Activated T-helper 2 cell treated with anti-CD3 and anti-CD28 coated beads, Interferon-gamma antibody, Interleukin-2, Interleukin-4, amounts not matched to agents 10 μg/mL and 5 μg/mL and 100 μg/mL, durations not matched to agents 14 hours and 24 hours and 36 hours (primary cell): ENCODE measurements at regions of chr7 and their contacts with region 1.

Region 1: DNA sequence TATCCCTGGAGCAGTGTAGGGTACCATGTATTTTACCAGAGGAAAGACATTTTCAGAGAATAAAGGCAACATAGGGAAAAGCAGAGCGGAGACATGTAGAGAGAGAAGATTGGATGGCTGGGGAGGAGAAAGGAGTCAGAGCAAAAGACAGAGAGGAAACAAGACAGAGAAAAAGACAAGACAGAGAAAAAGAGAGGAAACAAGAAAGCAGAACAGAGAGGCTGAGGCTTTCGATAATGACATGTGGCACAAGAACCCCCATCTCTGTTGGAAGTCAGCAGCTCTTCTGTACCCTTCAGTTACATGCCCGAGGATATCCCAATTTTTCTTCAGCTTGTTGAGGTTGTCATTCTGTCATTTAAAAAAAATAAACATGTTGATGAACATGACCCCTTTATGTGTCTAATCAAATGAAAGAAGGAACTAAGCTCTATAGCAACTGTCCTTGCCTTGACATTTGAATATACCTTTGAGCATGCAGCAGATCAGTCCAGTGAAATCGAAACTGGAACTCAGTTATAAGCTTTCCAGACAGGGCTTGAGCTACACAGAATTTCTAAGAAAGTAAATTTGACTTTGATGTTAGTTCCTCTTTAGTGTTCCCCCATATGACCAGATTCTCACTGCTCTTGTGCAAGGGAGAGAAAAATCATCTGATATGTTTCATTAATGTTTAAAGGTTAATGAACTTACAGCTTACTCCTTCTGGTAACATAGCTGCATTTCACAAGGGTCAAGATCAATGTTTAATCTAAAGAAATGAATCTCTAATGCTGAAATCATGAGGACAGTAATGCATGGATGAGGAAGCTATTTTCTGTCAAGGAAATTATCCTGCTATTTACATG is 75.1 kb upstream of the SP4 start:
- DNase-seq: peak; percentile 31
- H3K4me3 Mint-ChIP-seq: peak overlapping the region; percentile 59
- H3K27ac Mint-ChIP-seq: peak overlapping the region; percentile 93
- H3K4me1 Mint-ChIP-seq: peaks cover 66% of the 10 kb centered on the region
- H3K27me3 Mint-ChIP-seq: no peaks in the 10 kb centered on the region

Region 2: GRCh38 chr7:19708397-19709248 is 1644.1 kb before region 1 on chr7 and contains the start of gene POLR1F:
- intact Hi-C with region 1: loop called (anchors 10 kb)
- DNase-seq: peak; percentile 93
- H3K4me3 Mint-ChIP-seq: peak within 1 kb of the TSS; percentile 93
- H3K27ac Mint-ChIP-seq: peak within 1 kb of the TSS; percentile 88
- H3K4me1 Mint-ChIP-seq: peaks cover 39% of the 10 kb centered on the region
- H3K27me3 Mint-ChIP-seq: peaks cover 8% of the 10 kb centered on the region
- total RNA-seq, gene POLR1F: 32.5 and 41.1 TPM in 2 replicates

Region 3: DNA sequence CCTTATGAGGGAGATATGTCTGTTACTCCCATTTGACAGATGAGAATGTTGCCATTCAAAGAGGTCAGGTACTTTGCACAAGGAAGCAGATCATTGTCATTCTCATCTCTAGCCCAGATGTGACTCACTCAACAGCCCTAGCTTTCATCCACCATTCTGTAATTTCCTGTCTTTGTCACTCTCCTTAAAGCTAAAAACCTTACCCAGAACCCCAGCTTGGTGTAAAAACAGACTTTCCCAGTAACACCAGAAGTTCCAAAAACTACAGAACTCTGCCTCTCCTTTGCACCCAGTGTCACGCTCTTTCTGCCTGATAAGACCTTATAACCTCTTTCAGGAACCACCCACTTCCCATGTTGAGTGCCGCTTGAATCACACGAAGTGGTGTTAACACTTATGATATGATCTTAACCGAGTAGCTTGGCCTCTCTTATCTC is 14.0 kb before region 1 on chr7:
- intact Hi-C with region 1: loop called (anchors 1 kb)
- DNase-seq: peak; percentile 73
- H3K4me3 Mint-ChIP-seq: peak overlapping the region; percentile 23
- H3K27ac Mint-ChIP-seq: peak overlapping the region; percentile 87
- H3K4me1 Mint-ChIP-seq: peaks cover 55% of the 10 kb centered on the region
- H3K27me3 Mint-ChIP-seq: no peaks in the 10 kb centered on the region

Region 4: GRCh38 chr7:21371360-21371759 is 18.6 kb after region 1 on chr7:
- intact Hi-C with region 1: loop called (anchors 2 kb)
- DNase-seq: no peak
- H3K4me3 Mint-ChIP-seq: no peak overlapping the region
- H3K27ac Mint-ChIP-seq: no peak overlapping the region
- H3K4me1 Mint-ChIP-seq: peaks cover 26% of the 10 kb centered on the region
- H3K27me3 Mint-ChIP-seq: no peaks in the 10 kb centered on the region

Region 5: GRCh38 chr7:21427182-21427870 is 74.6 kb after region 1 on chr7:
- intact Hi-C with region 1: loop called (anchors 1 kb)
- DNase-seq: peak; percentile 99
- H3K4me3 Mint-ChIP-seq: peak overlapping the region; percentile 100
- H3K27ac Mint-ChIP-seq: peak overlapping the region; percentile 100
- H3K4me1 Mint-ChIP-seq: peaks cover 40% of the 10 kb centered on the region
- H3K27me3 Mint-ChIP-seq: no peaks in the 10 kb centered on the region

Region 6: GRCh38 chr7:22445140-22445743 is 1092.5 kb after region 1 on chr7:
- intact Hi-C with region 1: loop called (anchors 5 kb)
- DNase-seq: no peak
- H3K4me3 Mint-ChIP-seq: no peak overlapping the region
- H3K27ac Mint-ChIP-seq: no peak overlapping the region
- H3K4me1 Mint-ChIP-seq: peaks cover 21% of the 10 kb centered on the region
- H3K27me3 Mint-ChIP-seq: peaks cover 22% of the 10 kb centered on the region